ENCODE measurements at regions of chr16 and their contacts with region 1.

Region 1: GRCh38 chr16:3123986-3124886 is 10.6 kb upstream of the ZNF213 start:
- DNase-seq: peak; percentile 96
- ATAC-seq: peak; percentile 92
- H3K4me3 ChIP-seq: peak overlapping the region; percentile 4 to 94 (median 84)
- H3K4me3 Mint-ChIP-seq: peak overlapping the region; percentile 99
- H3K27ac ChIP-seq: peak overlapping the region; percentile 54 to 69
- H3K27ac Mint-ChIP-seq: peak overlapping the region; percentile 98
- H3K4me1 ChIP-seq: peaks cover 20 to 31% of the 10 kb centered on the region in 2 donors
- H3K4me1 Mint-ChIP-seq: peaks cover 28% of the 10 kb centered on the region
- H3K27me3 ChIP-seq: no peaks in the 10 kb centered on the region
- H3K27me3 Mint-ChIP-seq: no peaks in the 10 kb centered on the region
- CTCF ChIP-seq: no peak

Region 2: GRCh38 chr16:3065069-3065741 is 59.0 kb before region 1 on chr16 and contains the start of gene IL32:
- CTCF ChIA-PET with region 1: interaction called, 140 read pairs
- POLR2A ChIA-PET with region 1: no interaction called
- intact Hi-C with region 1: no loop called
- DNase-seq: no peak
- ATAC-seq: no peak
- H3K4me3 ChIP-seq: no peak within 1 kb of the TSS
- H3K4me3 Mint-ChIP-seq: no peak within 1 kb of the TSS
- H3K27ac ChIP-seq: no peak within 1 kb of the TSS
- H3K27ac Mint-ChIP-seq: peak within 1 kb of the TSS; percentile 59
- H3K4me1 ChIP-seq: peaks cover 3 to 4% of the 10 kb centered on the region in 2 donors
- H3K4me1 Mint-ChIP-seq: peaks cover 4% of the 10 kb centered on the region
- H3K27me3 ChIP-seq: peaks cover 0 to under 1% (median 0%) of the 10 kb centered on the region in 4 experiments
- H3K27me3 Mint-ChIP-seq: no peaks in the 10 kb centered on the region
- CTCF ChIP-seq: no peak
- total RNA-seq, gene IL32: 2.0 and 2.3 TPM in 2 replicates

Region 3: GRCh38 chr16:3094289-3095027 is 29.8 kb before region 1 on chr16:
- CTCF ChIA-PET with region 1: interaction called, 238 read pairs
- POLR2A ChIA-PET with region 1: interaction called, 9 read pairs
- intact Hi-C with region 1: loop called (anchors 1 kb)
- DNase-seq: peak; percentile 68
- ATAC-seq: no peak
- H3K4me3 ChIP-seq: no peak overlapping the region
- H3K4me3 Mint-ChIP-seq: no peak overlapping the region
- H3K27ac ChIP-seq: no peak overlapping the region
- H3K27ac Mint-ChIP-seq: peak overlapping the region; percentile 34
- H3K4me1 ChIP-seq: peaks cover 9 to 12% of the 10 kb centered on the region in 2 donors
- H3K4me1 Mint-ChIP-seq: peaks cover 20% of the 10 kb centered on the region
- H3K27me3 ChIP-seq: peaks cover 0 to 3% (median 0%) of the 10 kb centered on the region in 4 experiments
- H3K27me3 Mint-ChIP-seq: no peaks in the 10 kb centered on the region
- CTCF ChIP-seq: peak; percentile 62

Region 4: DNA sequence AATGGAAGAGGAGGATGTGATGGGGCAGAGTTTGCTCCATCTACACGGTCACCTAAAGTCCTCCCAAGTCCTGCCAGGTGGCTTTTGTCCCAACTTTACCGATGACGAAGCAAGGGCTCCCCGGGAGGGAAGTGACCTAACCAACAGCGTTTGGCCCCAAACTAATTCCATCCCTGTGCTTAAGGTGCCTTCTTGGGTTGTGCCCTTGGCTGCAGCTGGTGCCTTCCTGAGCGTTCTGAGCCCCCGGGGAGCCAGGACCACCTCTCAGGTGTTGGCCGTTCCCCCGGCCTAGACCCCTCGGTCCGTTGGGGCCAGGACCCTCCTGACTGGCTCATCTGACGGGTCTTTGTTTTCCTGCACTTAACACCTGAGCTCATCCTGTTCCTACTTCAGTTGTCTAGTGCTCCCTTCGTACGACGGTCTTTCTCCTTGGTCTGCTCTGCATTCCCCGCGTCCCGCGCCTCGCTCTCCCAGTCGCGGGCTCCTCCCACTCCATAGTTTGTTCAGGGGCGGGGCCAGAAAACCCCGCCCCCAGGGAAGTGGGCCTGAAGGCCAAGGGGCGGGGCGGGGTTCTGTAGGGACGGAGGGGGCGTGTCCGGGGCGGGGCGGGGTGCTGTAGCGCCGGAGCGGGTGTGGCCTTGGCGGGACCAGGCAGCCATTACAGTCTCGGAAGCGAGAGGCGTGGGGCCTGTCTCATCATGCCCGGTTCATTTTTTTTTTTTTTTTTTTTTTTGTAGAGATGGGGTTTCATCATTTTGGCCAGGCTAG is 24.3 kb before region 1 on chr16:
- CTCF ChIA-PET with region 1: interaction called, 238 read pairs
- POLR2A ChIA-PET with region 1: interaction called, 11 read pairs
- intact Hi-C with region 1: loop called (anchors 1 kb)
- DNase-seq: peak; percentile 88
- ATAC-seq: peak; percentile 88
- H3K4me3 ChIP-seq: peak overlapping the region in 4 of 5 experiments; percentile 26 to 48 (median 36)
- H3K4me3 Mint-ChIP-seq: peak overlapping the region; percentile 83
- H3K27ac ChIP-seq: no peak overlapping the region
- H3K27ac Mint-ChIP-seq: peak overlapping the region; percentile 56
- H3K4me1 ChIP-seq: peaks cover 25 to 40% of the 10 kb centered on the region in 2 donors
- H3K4me1 Mint-ChIP-seq: peaks cover 32% of the 10 kb centered on the region
- H3K27me3 ChIP-seq: no peaks in the 10 kb centered on the region
- H3K27me3 Mint-ChIP-seq: no peaks in the 10 kb centered on the region
- CTCF ChIP-seq: no peak

Region 5: GRCh38 chr16:3106205-3106928 is 17.9 kb before region 1 on chr16:
- CTCF ChIA-PET with region 1: interaction called, 238 read pairs
- POLR2A ChIA-PET with region 1: interaction called, 11 read pairs
- intact Hi-C with region 1: loop called (anchors 1 kb)
- DNase-seq: peak; percentile 92
- ATAC-seq: peak; percentile 95
- H3K4me3 ChIP-seq: peak overlapping the region; percentile 70 to 85 (median 78)
- H3K4me3 Mint-ChIP-seq: peak overlapping the region; percentile 82
- H3K27ac ChIP-seq: peak overlapping the region; percentile 77 to 78
- H3K27ac Mint-ChIP-seq: peak overlapping the region; percentile 70
- H3K4me1 ChIP-seq: peaks cover 15 to 24% of the 10 kb centered on the region in 2 donors
- H3K4me1 Mint-ChIP-seq: peaks cover 18% of the 10 kb centered on the region
- H3K27me3 ChIP-seq: peaks cover 0 to under 1% (median 0%) of the 10 kb centered on the region in 4 experiments
- H3K27me3 Mint-ChIP-seq: no peaks in the 10 kb centered on the region
- CTCF ChIP-seq: no peak

Region 6: DNA sequence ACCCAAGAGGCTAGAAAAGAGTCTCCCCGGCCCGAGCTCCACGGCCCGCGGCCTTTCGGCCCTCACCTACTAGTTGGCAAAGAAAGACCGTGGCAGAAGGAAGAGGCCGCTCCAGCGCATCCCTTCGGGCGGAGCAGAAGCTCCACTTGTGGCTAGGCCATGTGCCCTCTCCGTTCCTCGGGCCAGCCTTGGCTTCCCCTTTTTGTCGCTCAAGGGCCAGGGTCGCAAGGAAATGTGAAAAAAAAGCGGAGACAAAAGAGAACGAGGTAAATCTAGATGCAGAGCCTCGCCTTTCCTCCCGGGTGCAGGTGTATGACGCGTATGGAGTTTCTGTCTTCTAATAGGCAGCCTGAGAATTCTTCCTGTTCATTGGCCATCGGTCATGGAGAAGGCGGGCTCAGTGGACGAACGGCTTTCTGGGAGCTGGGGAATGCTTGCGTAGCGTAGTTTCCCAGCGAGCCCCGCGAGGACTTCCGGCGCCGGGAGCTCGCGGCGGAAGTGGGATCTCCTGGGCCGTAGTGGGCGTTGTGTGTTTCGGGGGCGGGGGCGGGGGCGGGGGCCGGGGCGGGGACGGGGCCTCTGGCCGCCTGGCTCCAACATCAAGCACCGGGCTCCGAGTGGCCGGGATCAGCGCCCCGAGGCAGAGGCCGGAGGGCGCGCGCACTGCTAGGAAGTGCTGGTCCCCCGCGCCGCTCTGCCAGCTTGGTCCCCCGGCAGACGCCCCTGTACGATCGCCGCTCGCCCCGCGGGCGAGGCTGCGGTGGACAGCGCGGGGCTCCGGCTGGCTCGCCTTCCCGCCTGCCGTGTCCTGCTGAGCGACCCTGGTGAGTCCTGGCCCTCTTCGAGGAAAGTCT is 10.6 kb after region 1 on chr16 and contains the start of gene ZNF213:
- CTCF ChIA-PET with region 1: interaction called, 13 read pairs
- POLR2A ChIA-PET with region 1: interaction called, 5 read pairs
- intact Hi-C with region 1: loop called (anchors 1 kb)
- DNase-seq: peak; percentile 97
- ATAC-seq: peak; percentile 98
- H3K4me3 ChIP-seq: peak within 1 kb of the TSS; percentile 70 to 99 (median 86)
- H3K4me3 Mint-ChIP-seq: peak within 1 kb of the TSS; percentile 98
- H3K27ac ChIP-seq: peak within 1 kb of the TSS; percentile 91 to 93
- H3K27ac Mint-ChIP-seq: peak within 1 kb of the TSS; percentile 97
- H3K4me1 ChIP-seq: peaks cover 15 to 20% of the 10 kb centered on the region in 2 donors
- H3K4me1 Mint-ChIP-seq: peaks cover 29% of the 10 kb centered on the region
- H3K27me3 ChIP-seq: no peaks in the 10 kb centered on the region
- H3K27me3 Mint-ChIP-seq: no peaks in the 10 kb centered on the region
- CTCF ChIP-seq: no peak
- total RNA-seq, gene ZNF213: 7.2 and 9.5 TPM in 2 replicates

Region 7: DNA sequence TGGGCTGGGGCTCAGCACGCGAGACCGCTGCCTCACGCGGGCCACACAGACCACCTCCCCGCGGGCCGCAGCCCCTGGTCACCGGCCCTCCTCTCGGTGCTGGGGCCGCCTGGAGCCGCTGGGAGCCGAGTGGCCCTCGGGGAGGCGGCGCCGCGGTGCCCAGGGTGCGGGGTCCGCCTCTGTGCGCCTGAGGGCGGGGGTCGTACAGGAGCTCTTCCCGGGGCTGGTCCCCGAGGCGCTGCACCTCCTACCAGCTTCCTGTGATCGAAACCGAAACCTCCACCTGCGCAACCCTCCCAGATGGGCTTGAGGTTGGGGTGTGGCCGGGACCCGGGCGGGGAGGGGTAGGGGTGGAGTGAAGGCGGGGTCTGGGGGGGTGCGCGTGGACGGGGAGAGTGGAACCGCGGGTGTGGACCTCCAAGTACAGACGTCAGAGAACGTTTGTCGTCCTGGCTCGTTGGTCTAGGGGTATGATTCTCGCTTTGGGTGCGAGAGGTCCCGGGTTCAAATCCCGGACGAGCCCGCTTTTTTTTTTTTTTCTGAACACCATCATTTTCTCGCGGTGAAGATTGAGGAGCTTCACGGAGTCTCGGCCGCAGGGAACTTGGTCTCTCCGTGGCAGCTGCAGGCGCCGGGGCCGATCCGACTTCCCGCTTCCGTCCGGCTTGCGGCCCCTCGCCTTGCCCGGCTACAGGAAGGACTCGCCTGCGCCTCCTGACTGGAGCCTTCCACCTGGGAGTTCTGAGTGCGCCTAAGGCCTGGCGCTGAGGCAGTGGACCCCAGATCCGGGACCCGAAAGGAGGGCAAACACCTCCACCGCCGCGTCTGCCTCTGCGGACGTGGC is 34.5 kb after region 1 on chr16:
- CTCF ChIA-PET with region 1: interaction called, 13 read pairs
- POLR2A ChIA-PET with region 1: interaction called, 4 read pairs
- intact Hi-C with region 1: loop called (anchors 2 kb)
- DNase-seq: peak; percentile 92
- ATAC-seq: peak; percentile 91
- H3K4me3 ChIP-seq: peak overlapping the region; percentile 67 to 96 (median 84)
- H3K4me3 Mint-ChIP-seq: peak overlapping the region; percentile 93
- H3K27ac ChIP-seq: peak overlapping the region; percentile 43 to 60
- H3K27ac Mint-ChIP-seq: peak overlapping the region; percentile 95
- H3K4me1 ChIP-seq: peaks cover 17 to 27% of the 10 kb centered on the region in 2 donors
- H3K4me1 Mint-ChIP-seq: peaks cover 18% of the 10 kb centered on the region
- H3K27me3 ChIP-seq: peaks cover 0 to 6% (median 2%) of the 10 kb centered on the region in 4 experiments
- H3K27me3 Mint-ChIP-seq: peaks cover 2% of the 10 kb centered on the region
- CTCF ChIP-seq: no peak

Measured in B cell (primary cell).